Calu3 (cell line): ENCODE measurements at regions of chr4 and their contacts with region 1.

Region 1: DNA sequence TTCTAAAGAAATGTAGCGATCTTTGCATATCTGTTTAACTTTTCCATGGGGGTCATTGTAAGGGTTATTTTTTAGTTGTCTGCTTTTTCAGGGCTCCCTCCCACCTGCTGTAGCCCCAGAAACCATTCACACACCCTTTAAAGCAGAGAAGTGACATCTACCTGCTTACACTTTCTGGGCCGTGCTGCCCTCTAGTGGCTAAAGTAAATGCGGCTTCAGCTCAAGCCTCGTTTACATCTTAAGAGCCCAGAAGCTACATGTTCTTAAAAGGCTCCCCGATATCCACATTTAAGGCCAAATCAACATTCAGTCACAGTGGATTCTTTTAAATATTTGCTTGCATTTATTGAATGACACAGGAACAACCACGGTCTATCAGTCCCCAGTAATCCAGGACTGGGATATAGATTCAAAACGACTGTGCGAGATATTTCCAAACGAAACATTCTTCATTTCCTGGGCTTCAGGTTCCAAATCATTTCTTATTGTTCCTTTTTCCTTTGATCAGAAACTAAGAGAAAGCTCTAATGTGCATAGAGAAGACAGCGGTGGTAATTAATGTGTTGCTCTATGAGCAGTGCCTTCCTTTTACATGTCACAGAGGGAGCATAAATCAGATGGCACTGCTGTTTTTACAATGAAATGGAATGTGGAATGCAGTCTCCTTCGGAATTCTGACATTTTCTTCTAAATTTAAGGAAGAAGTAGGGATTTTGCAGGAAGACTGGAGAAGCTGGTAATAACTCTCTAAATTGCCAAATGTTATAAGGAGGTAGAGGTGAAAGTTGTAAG is 119.9 kb downstream of the RASGEF1B start:
- DNase-seq: peak; percentile 61
- H3K4me3 Mint-ChIP-seq: no peak overlapping the region
- H3K27ac Mint-ChIP-seq: no peak overlapping the region
- H3K4me1 Mint-ChIP-seq: no peaks in the 10 kb centered on the region
- H3K27me3 Mint-ChIP-seq: peaks cover 7% of the 10 kb centered on the region
- CTCF ChIP-seq: no peak

Region 2: GRCh38 chr4:81215931-81216330 is 135.9 kb before region 1 on chr4:
- CTCF ChIA-PET with region 1: no interaction called
- intact Hi-C with region 1: loop called (anchors 2 kb)
- DNase-seq: no peak
- H3K4me3 Mint-ChIP-seq: peak overlapping the region; percentile 63
- H3K27ac Mint-ChIP-seq: no peak overlapping the region
- H3K4me1 Mint-ChIP-seq: no peaks in the 10 kb centered on the region
- H3K27me3 Mint-ChIP-seq: peaks cover 5% of the 10 kb centered on the region
- CTCF ChIP-seq: no peak

Region 3: GRCh38 chr4:81621490-81621889 is 269.6 kb after region 1 on chr4:
- CTCF ChIA-PET with region 1: no interaction called
- intact Hi-C with region 1: no loop called
- DNase-seq: no peak
- H3K4me3 Mint-ChIP-seq: no peak overlapping the region
- H3K27ac Mint-ChIP-seq: no peak overlapping the region
- H3K4me1 Mint-ChIP-seq: peaks cover 29% of the 10 kb centered on the region
- H3K27me3 Mint-ChIP-seq: no peaks in the 10 kb centered on the region
- CTCF ChIP-seq: no peak

Region 4: DNA sequence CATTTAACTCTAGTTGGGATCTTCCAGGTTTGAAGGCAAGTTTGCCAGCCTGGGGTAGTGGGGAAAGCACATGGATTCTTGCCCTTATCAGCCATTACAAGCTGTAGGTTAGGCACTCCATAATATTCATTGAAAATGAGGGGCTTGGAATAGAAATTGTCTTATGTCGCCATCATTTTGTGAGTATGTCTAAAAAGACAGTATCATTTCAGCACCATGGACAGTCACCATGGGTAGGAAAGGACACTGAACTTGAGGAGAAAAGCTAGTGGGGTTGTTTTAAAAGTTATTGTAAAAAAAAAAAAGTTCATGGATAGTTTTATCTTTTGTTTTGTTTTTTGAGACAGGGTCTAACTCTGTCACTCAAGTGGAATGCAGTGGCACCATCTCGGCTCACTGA is 665.8 kb after region 1 on chr4:
- CTCF ChIA-PET with region 1: no interaction called
- intact Hi-C with region 1: no loop called
- DNase-seq: peak; percentile 11
- H3K4me3 Mint-ChIP-seq: no peak overlapping the region
- H3K27ac Mint-ChIP-seq: no peak overlapping the region
- H3K4me1 Mint-ChIP-seq: no peaks in the 10 kb centered on the region
- H3K27me3 Mint-ChIP-seq: no peaks in the 10 kb centered on the region
- CTCF ChIP-seq: no peak